Endothelial cell of umbilical vein (primary cell): ENCODE measurements at regions of chr4 and their contacts with region 1.

Region 1: GRCh38 chr4:41214136-41214824 is at the start of gene APBB2:
- DNase-seq: peak; percentile 98
- H3K4me3 ChIP-seq: peak within 1 kb of the TSS; percentile 85 to 96 (median 86)
- H3K27ac ChIP-seq: peak within 1 kb of the TSS; percentile 49
- H3K4me1 ChIP-seq: peaks cover 38% of the 10 kb centered on the region
- H3K27me3 ChIP-seq: no peaks in the 10 kb centered on the region
- CTCF ChIP-seq: peak; percentile 52 to 83
- POLR2A ChIP-seq: peak; percentile 93
- total RNA-seq, gene APBB2: 124 and 162 TPM in 2 replicates

Region 2: GRCh38 chr4:40908702-40909362 is 305.4 kb before region 1 on chr4:
- CTCF ChIA-PET with region 1: interaction called, 8 read pairs
- POLR2A ChIA-PET with region 1: no interaction called
- dilution Hi-C with region 1: no loop called
- intact Hi-C with region 1: loop called (anchors 1 kb)
- DNase-seq: peak; percentile 79
- H3K4me3 ChIP-seq: no peak overlapping the region
- H3K27ac ChIP-seq: peak overlapping the region; percentile 98
- H3K4me1 ChIP-seq: peaks cover 29% of the 10 kb centered on the region
- H3K27me3 ChIP-seq: no peaks in the 10 kb centered on the region
- CTCF ChIP-seq: peak; percentile 92 to 96
- POLR2A ChIP-seq: no peak

Region 3: DNA sequence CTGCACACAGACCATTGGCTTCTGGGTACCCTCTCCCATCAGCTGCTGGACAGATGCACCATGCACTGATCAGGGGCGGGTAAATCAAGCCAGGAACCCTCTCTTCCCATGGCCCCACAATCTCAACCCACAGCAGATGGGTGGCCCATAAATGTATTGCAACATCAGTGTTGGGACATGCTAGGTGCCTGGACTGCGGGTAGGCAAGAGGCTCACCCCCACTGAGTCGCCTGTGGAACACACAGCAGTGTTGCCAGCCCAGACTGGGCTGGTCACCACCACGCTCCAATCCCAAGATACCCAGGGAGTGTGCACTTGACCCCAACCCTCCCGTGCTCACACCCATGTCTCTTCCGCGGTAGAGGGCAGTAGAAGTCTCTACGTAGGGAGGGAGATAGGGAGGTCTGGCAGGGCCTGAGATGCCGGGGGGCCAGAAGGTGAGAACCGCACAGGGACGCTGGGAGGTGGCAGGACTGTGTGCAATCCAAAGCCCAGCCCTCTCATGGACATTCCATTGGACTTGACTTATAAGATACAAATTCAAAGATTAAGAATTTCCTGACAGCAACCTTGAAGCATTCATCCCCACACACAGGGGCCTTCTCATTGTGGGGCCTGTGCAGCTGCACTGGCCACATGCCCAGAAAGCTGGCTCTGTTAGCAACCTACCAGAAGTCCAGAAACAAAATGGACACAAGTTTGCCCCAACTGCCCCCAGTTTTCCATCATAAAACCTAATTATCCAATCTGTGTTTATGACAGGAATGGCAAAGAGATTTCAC is 280.8 kb before region 1 on chr4:
- CTCF ChIA-PET with region 1: interaction called, 29 read pairs
- POLR2A ChIA-PET with region 1: no interaction called
- dilution Hi-C with region 1: loop called (anchors 25 kb)
- intact Hi-C with region 1: no loop called
- DNase-seq: peak; percentile 79
- H3K4me3 ChIP-seq: no peak overlapping the region
- H3K27ac ChIP-seq: no peak overlapping the region
- H3K4me1 ChIP-seq: peaks cover 6% of the 10 kb centered on the region
- H3K27me3 ChIP-seq: no peaks in the 10 kb centered on the region
- CTCF ChIP-seq: no peak
- POLR2A ChIP-seq: no peak

Region 4: GRCh38 chr4:41024556-41025491 is 189.5 kb before region 1 on chr4:
- CTCF ChIA-PET with region 1: interaction called, 10 read pairs
- POLR2A ChIA-PET with region 1: no interaction called
- dilution Hi-C with region 1: no loop called
- intact Hi-C with region 1: no loop called
- DNase-seq: peak; percentile 28
- H3K4me3 ChIP-seq: no peak overlapping the region
- H3K27ac ChIP-seq: no peak overlapping the region
- H3K4me1 ChIP-seq: peaks cover 15% of the 10 kb centered on the region
- H3K27me3 ChIP-seq: no peaks in the 10 kb centered on the region
- CTCF ChIP-seq: no peak
- POLR2A ChIP-seq: no peak

Region 5: GRCh38 chr4:41095973-41096372 is 118.3 kb before region 1 on chr4:
- CTCF ChIA-PET with region 1: interaction called, 4 read pairs
- POLR2A ChIA-PET with region 1: no interaction called
- dilution Hi-C with region 1: no loop called
- intact Hi-C with region 1: loop called (anchors 5 kb)
- DNase-seq: no peak
- H3K4me3 ChIP-seq: no peak overlapping the region
- H3K27ac ChIP-seq: no peak overlapping the region
- H3K4me1 ChIP-seq: no peaks in the 10 kb centered on the region
- H3K27me3 ChIP-seq: no peaks in the 10 kb centered on the region
- CTCF ChIP-seq: no peak
- POLR2A ChIP-seq: no peak

Region 6: GRCh38 chr4:41177016-41177415 is 37.3 kb before region 1 on chr4:
- CTCF ChIA-PET with region 1: interaction called, 19 read pairs
- POLR2A ChIA-PET with region 1: no interaction called
- dilution Hi-C with region 1: no loop called
- intact Hi-C with region 1: loop called (anchors 1 kb)
- DNase-seq: peak; percentile 64
- H3K4me3 ChIP-seq: no peak overlapping the region
- H3K27ac ChIP-seq: peak overlapping the region; percentile 72
- H3K4me1 ChIP-seq: peaks cover 59% of the 10 kb centered on the region
- H3K27me3 ChIP-seq: no peaks in the 10 kb centered on the region
- CTCF ChIP-seq: no peak
- POLR2A ChIP-seq: no peak

Region 7: GRCh38 chr4:41281038-41281634 is 66.9 kb after region 1 on chr4:
- CTCF ChIA-PET with region 1: no interaction called
- POLR2A ChIA-PET with region 1: no interaction called
- dilution Hi-C with region 1: no loop called
- intact Hi-C with region 1: no loop called
- DNase-seq: peak; percentile 87
- H3K4me3 ChIP-seq: no peak overlapping the region
- H3K27ac ChIP-seq: no peak overlapping the region
- H3K4me1 ChIP-seq: no peaks in the 10 kb centered on the region
- H3K27me3 ChIP-seq: peaks cover 0 to 1% of the 10 kb centered on the region in 2 experiments
- CTCF ChIP-seq: peak; percentile 53 to 77
- POLR2A ChIP-seq: no peak

Region 8: DNA sequence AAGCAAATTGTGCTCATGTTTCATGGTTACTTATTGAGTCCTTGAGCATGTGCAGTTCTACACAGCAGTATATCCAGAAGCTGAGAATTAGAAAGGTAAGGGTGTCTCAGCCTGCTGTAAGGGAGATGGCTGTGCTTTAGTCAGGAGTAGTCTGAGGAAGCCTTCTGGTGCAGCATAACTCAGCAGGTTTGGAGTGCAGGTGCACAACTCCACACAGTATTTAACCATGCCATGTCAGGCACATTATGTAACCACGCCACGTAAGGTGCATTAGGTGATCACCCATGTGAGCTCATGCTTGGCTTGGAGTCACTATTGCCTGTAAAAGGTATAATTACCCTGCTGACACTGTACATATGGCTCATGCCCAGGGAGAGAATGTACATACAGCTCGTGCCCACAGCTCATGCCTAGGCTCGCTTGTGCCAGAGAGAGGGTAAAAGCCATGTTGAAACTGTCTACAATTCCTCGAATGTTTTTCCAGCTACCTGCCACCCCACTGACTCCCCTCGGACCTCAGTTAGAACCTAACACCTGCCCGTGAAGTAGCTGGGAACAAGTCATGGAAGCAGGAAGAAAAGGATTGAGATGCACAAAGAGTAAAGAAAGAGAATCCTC is 80.3 kb after region 1 on chr4:
- CTCF ChIA-PET with region 1: no interaction called
- POLR2A ChIA-PET with region 1: no interaction called
- dilution Hi-C with region 1: no loop called
- intact Hi-C with region 1: no loop called
- DNase-seq: no peak
- H3K4me3 ChIP-seq: no peak overlapping the region
- H3K27ac ChIP-seq: no peak overlapping the region
- H3K4me1 ChIP-seq: peaks cover 2% of the 10 kb centered on the region
- H3K27me3 ChIP-seq: peaks cover 3% of the 10 kb centered on the region in 2 experiments
- CTCF ChIP-seq: no peak
- POLR2A ChIP-seq: no peak